ENCODE measurements at regions of chr3 and their contacts with region 1.

Region 1: DNA sequence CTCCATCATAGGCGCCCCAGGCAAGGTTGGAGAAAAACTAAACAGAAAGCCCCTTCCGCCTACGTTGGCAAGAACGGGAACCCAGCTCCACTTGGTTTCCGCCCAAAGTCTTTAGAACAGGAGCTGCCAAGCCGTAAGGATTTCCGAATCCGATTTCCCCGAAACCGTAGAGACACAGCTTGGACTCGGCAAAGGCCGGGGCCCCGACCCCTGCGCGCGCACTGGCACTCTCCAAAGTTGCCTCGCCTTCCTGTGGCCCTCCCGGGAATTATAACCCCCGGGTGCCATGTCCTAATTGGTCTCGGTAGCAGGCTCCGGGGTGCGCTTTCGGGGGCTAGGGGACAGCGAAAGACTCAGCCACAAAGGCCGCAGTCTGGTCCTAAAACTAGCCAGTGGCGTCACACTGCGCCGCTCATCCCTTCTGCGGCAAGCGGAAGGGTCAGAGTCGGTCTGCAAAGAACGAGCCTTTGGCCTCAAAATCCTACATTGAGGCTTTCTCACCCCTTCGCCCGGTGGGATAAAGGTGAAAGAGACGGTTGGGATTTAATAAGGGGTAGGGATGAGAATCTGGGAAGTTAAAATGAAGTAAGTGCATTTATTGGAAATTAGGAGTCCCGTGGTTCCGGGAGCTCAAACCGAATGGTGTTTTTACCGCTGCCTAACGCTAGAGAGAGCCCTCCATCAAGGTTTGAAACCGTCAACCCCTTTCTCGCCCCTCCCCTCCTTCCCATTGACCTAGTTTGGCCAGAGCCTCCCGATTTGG is 6.8 kb downstream of the BCL6 start:
- DNase-seq: no peak
- H3K4me3 ChIP-seq: peak overlapping the region; percentile 45
- H3K27me3 ChIP-seq: no peaks in the 10 kb centered on the region
- CTCF ChIP-seq: peak; percentile 77

Region 2: GRCh38 chr3:188066141-188066540 is 327.6 kb after region 1 on chr3:
- CTCF ChIA-PET with region 1: interaction called, 3 read pairs
- POLR2A ChIA-PET with region 1: interaction called, 32 read pairs
- DNase-seq: no peak
- H3K4me3 ChIP-seq: no peak overlapping the region
- H3K27me3 ChIP-seq: no peaks in the 10 kb centered on the region
- CTCF ChIP-seq: no peak

Region 3: GRCh38 chr3:188262913-188263683 is 524.6 kb after region 1 on chr3:
- CTCF ChIA-PET with region 1: interaction called, 45 read pairs
- POLR2A ChIA-PET with region 1: no interaction called
- DNase-seq: peak; percentile 42
- H3K4me3 ChIP-seq: no peak overlapping the region
- H3K27me3 ChIP-seq: no peaks in the 10 kb centered on the region
- CTCF ChIP-seq: no peak

Region 4: GRCh38 chr3:188663839-188664238 is 925.3 kb after region 1 on chr3:
- CTCF ChIA-PET with region 1: interaction called, 10 read pairs
- POLR2A ChIA-PET with region 1: no interaction called
- DNase-seq: no peak
- H3K4me3 ChIP-seq: no peak overlapping the region
- H3K27me3 ChIP-seq: no peaks in the 10 kb centered on the region
- CTCF ChIP-seq: no peak

Region 5: DNA sequence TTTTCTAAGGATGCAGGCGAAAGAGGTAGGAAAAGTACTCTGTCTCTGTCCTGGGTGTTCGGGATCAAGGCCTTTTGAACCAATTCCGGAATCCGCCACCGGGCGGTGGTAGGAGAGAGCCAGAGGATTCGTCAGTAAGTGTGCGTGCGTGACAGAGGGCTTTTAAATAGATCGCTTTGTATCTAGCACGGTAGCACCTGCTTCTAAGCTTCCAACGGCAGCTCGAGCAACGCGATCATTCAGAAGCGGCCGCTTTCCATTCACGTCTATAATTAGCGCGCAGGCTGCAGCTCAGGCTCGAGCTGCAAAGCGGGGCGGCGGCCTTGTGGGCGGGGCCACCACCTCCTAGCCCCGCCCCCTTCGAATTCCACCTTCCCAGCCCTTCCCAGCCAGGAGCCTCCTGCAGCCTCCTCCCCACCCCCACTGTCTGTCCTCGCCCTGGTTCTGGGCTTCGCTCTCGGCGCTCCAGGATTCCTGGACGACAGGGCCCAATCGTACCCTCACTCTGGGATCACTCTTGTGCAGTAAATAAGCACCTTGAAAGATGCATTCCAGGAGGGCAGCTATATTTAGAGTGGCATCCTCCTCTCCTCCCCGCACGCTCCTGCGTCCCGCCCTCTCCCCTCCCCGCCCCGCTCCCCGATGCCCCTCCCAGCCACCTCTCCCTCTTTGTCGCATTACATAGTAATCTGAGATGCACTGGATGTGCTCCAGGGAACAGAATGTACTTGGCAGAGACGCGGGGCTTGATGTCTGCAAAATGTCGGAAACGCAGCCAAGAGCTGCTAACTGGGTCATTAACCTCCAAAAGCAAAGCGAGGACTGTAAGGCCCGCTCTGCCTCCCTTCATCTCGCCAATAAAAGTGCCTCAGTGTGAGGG is 1209.1 kb after region 1 on chr3:
- CTCF ChIA-PET with region 1: interaction called, 250 read pairs
- POLR2A ChIA-PET with region 1: no interaction called
- DNase-seq: peak; percentile 54
- H3K4me3 ChIP-seq: peak overlapping the region; percentile 39
- H3K27me3 ChIP-seq: no peaks in the 10 kb centered on the region
- CTCF ChIP-seq: peak; percentile 47

Region 6: DNA sequence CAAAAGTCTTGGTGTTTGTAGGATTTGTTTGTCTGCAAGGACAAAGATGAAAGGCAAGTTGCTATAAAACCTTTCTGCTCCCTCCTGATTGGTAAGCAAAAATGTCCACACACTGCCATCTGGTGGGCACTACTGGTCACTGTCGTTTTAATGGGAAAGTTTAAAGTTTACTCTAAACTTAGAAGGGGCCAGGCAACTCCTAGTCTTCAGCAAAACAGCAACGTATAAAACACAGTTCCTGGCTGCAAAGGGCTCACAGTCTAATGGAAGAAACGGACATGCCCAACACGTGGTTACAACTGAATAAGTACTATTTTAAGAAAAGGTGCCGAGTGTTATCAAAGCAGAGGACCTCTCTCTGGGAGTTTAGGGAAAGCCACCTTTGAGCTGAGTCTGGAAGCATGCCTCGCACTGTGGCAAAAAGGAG is 1409.6 kb after region 1 on chr3:
- CTCF ChIA-PET with region 1: interaction called, 29 read pairs
- POLR2A ChIA-PET with region 1: no interaction called
- DNase-seq: peak; percentile 11
- H3K4me3 ChIP-seq: no peak overlapping the region
- H3K27me3 ChIP-seq: peaks cover 6% of the 10 kb centered on the region
- CTCF ChIP-seq: peak; percentile 73

Measured in BJ (cell line).